Panc1 (cell line): ENCODE measurements at regions of chr10 and their contacts with region 1.

Region 1: GRCh38 chr10:121481196-121481595 is 117.0 kb downstream of the FGFR2 start:
- DNase-seq: no peak
- ATAC-seq: no peak
- H3K4me3 ChIP-seq: no peak overlapping the region
- H3K27ac ChIP-seq: no peak overlapping the region
- H3K4me1 ChIP-seq: no peaks in the 10 kb centered on the region
- H3K27me3 ChIP-seq: no peaks in the 10 kb centered on the region
- CTCF ChIP-seq: no peak

Region 2: DNA sequence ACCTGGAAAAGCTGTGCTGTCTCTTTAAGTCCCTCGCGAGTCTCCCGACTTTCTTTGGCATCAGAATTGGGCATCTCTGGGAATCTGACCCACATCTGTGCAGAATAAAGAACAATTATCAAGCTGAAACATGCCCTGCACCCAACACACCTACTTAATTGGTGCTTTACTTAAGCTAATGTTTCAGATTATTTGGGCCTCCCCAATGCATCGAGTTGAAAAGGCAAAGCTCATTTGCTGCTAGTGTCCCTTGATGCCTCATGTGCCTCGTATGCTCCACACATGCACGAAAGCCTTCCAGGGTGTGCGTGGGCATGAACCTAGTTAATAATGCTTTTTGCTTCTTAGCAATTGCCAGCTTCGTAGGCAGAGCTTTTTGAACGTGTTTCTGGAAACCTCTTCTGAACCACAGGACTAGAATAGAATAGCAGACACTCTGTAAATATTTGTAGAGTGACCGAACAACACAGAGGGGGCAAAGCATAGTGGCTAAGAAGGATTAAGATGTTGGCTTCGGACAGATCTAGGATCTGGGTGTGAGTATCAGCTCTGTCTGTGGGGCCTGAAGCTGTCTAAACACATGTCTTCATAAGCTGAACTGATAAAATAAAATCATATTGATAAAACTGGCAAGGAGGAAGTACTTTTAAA is 143.8 kb after region 1 on chr10:
- CTCF ChIA-PET with region 1: no interaction called
- POLR2A ChIA-PET with region 1: interaction called, 10 read pairs
- in situ Hi-C with region 1: no loop called
- intact Hi-C with region 1: no loop called
- DNase-seq: no peak
- ATAC-seq: no peak
- H3K4me3 ChIP-seq: no peak overlapping the region
- H3K27ac ChIP-seq: no peak overlapping the region
- H3K4me1 ChIP-seq: no peaks in the 10 kb centered on the region
- H3K27me3 ChIP-seq: peaks cover 3% of the 10 kb centered on the region
- CTCF ChIP-seq: no peak